ENCODE measurements at regions of chr5 and their contacts with region 1.

Region 1: GRCh38 chr5:102700120-102700831 is 54.8 kb upstream of the PAM start:
- DNase-seq: no peak
- ATAC-seq: no peak
- H3K4me3 ChIP-seq: no peak overlapping the region
- H3K4me3 Mint-ChIP-seq: no peak overlapping the region
- H3K27ac ChIP-seq: no peak overlapping the region
- H3K27ac Mint-ChIP-seq: no peak overlapping the region
- H3K4me1 ChIP-seq: no peaks in the 10 kb centered on the region
- H3K4me1 Mint-ChIP-seq: no peaks in the 10 kb centered on the region
- H3K27me3 ChIP-seq: no peaks in the 10 kb centered on the region
- H3K27me3 Mint-ChIP-seq: peaks cover 0 to 19% (median 5%) of the 10 kb centered on the region in 5 donors

Region 2: GRCh38 chr5:102146768-102147167 is 553.5 kb before region 1 on chr5:
- CTCF ChIA-PET with region 1: no interaction called
- POLR2A ChIA-PET with region 1: no interaction called
- intact Hi-C with region 1: no loop called
- DNase-seq: no peak
- ATAC-seq: no peak
- H3K4me3 ChIP-seq: no peak overlapping the region
- H3K4me3 Mint-ChIP-seq: no peak overlapping the region
- H3K27ac ChIP-seq: no peak overlapping the region
- H3K27ac Mint-ChIP-seq: no peak overlapping the region
- H3K4me1 ChIP-seq: no peaks in the 10 kb centered on the region
- H3K4me1 Mint-ChIP-seq: no peaks in the 10 kb centered on the region
- H3K27me3 ChIP-seq: no peaks in the 10 kb centered on the region
- H3K27me3 Mint-ChIP-seq: peaks cover 0 to 5% (median 0%) of the 10 kb centered on the region in 5 donors

Region 3: GRCh38 chr5:102959055-102959454 is 258.8 kb after region 1 on chr5:
- CTCF ChIA-PET with region 1: no interaction called
- POLR2A ChIA-PET with region 1: no interaction called
- intact Hi-C with region 1: loop called in 1 of 2 experiments (anchors 10 kb)
- DNase-seq: no peak
- ATAC-seq: no peak
- H3K4me3 ChIP-seq: no peak overlapping the region
- H3K4me3 Mint-ChIP-seq: no peak overlapping the region
- H3K27ac ChIP-seq: no peak overlapping the region
- H3K27ac Mint-ChIP-seq: no peak overlapping the region
- H3K4me1 ChIP-seq: no peaks in the 10 kb centered on the region
- H3K4me1 Mint-ChIP-seq: peaks cover 0 to 5% (median 2%) of the 10 kb centered on the region in 7 donors
- H3K27me3 ChIP-seq: no peaks in the 10 kb centered on the region
- H3K27me3 Mint-ChIP-seq: no peaks in the 10 kb centered on the region

Region 4: DNA sequence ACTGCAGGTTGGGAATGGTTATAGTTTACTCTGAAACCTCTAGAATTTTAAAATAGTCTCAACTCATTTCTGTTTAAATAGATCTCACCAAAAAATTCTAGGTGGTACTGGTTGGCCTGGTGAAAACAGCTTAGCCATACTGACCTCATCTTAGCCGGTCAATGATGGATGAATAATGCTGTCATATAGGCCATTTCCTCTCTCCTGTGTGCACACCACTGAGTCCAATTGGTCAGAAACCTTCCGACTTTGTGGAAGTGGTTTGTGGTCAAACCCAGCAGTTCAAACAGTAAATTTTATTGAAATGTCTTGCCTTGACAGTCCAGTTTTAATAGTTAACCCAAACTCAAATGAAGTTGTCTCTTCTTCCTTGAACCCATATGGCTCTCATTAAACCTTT is 321.0 kb after region 1 on chr5:
- CTCF ChIA-PET with region 1: no interaction called
- POLR2A ChIA-PET with region 1: no interaction called
- intact Hi-C with region 1: no loop called
- DNase-seq: no peak
- ATAC-seq: no peak
- H3K4me3 ChIP-seq: no peak overlapping the region
- H3K4me3 Mint-ChIP-seq: no peak overlapping the region
- H3K27ac ChIP-seq: no peak overlapping the region
- H3K27ac Mint-ChIP-seq: no peak overlapping the region
- H3K4me1 ChIP-seq: no peaks in the 10 kb centered on the region
- H3K4me1 Mint-ChIP-seq: peaks cover 0 to 3% (median 0%) of the 10 kb centered on the region in 7 donors
- H3K27me3 ChIP-seq: no peaks in the 10 kb centered on the region
- H3K27me3 Mint-ChIP-seq: no peaks in the 10 kb centered on the region